ENCODE measurements at regions of chr1 and their contacts with region 1.

Region 1: DNA sequence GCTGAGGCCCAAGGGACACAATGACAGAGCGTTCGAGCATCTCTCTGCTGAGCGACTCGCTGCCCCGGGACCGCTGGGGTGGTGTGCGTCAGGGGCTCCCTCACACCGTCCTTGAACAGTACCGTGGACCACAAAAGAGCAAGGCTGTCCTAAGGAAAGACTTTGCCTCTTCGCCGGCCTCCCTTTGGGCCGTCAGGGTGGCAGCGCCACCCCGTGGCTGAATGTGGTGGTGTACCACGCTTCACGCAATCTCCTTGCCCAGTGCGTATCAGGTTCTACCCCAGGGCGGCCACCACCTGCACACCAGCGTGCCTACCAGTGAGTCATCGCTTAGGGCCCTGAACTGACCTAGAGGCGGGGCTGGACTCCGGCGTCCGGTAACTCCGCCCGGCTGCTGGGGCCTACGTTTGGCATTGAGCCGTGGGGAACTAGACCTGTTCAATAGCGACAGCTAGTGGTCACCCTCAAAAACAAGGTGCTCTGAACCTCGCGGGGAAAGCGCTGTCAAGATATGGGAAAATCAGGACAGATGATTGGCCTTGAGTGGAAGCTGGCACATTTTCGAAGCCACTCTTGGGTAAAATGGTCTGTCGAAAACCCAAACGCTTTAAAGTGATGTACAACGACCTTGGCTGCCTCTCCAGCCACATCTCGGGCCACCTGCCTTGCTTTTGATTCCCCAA is 8.1 kb upstream of the TRAF3IP3 start:
- DNase-seq: peak; percentile 100
- H3K4me3 Mint-ChIP-seq: no peak overlapping the region
- H3K27ac Mint-ChIP-seq: no peak overlapping the region
- H3K4me1 Mint-ChIP-seq: peaks cover 23% of the 10 kb centered on the region
- H3K27me3 Mint-ChIP-seq: no peaks in the 10 kb centered on the region
- CTCF ChIP-seq: peak; percentile 98

Region 2: GRCh38 chr1:209485167-209485566 is 262.6 kb before region 1 on chr1:
- CTCF ChIA-PET with region 1: no interaction called
- POLR2A ChIA-PET with region 1: no interaction called
- intact Hi-C with region 1: no loop called
- DNase-seq: peak; percentile 100
- H3K4me3 Mint-ChIP-seq: no peak overlapping the region
- H3K27ac Mint-ChIP-seq: peak overlapping the region; percentile 25
- H3K4me1 Mint-ChIP-seq: peaks cover 40% of the 10 kb centered on the region
- H3K27me3 Mint-ChIP-seq: no peaks in the 10 kb centered on the region
- CTCF ChIP-seq: no peak

Region 3: GRCh38 chr1:209585672-209586071 is 162.0 kb before region 1 on chr1:
- CTCF ChIA-PET with region 1: interaction called, 36 read pairs
- POLR2A ChIA-PET with region 1: no interaction called
- intact Hi-C with region 1: no loop called
- DNase-seq: no peak
- H3K4me3 Mint-ChIP-seq: no peak overlapping the region
- H3K27ac Mint-ChIP-seq: no peak overlapping the region
- H3K4me1 Mint-ChIP-seq: peaks cover 10% of the 10 kb centered on the region
- H3K27me3 Mint-ChIP-seq: no peaks in the 10 kb centered on the region
- CTCF ChIP-seq: no peak

Region 4: DNA sequence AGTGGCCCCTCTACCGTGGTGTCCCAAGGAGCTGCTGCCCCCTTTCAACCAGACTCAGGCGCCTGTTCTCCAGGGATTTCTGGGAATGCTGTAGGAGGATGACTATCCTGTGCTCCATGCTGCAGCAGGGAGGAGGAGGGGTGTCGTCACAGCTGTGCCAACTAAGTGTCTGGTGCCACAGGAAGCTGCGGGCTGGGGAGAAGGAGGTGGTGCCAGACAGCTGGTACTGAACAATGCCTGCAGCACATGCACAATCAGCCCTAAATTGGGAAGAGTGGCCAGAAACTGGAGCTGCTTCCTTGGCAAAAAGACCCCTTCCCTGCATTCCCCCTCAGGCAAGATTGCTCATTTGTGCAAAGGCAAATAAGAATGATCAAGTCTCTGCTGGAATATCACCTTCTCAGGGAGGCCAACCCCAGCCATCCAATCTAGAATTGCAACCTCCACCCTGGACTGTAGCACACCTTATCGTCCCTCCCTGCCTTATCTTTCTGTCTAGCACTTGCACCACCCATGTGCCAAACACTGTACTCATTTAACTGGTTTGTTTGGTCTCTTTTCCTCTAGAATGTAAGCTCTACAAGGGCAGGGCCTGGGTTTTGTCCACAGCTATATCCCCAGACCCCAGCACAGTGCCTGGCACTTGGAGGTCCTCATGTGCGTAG is 128.8 kb before region 1 on chr1:
- CTCF ChIA-PET with region 1: interaction called, 12 read pairs
- POLR2A ChIA-PET with region 1: no interaction called
- intact Hi-C with region 1: no loop called
- DNase-seq: peak; percentile 63
- H3K4me3 Mint-ChIP-seq: no peak overlapping the region
- H3K27ac Mint-ChIP-seq: peak overlapping the region; percentile 24
- H3K4me1 Mint-ChIP-seq: peaks cover 43% of the 10 kb centered on the region
- H3K27me3 Mint-ChIP-seq: no peaks in the 10 kb centered on the region
- CTCF ChIP-seq: no peak

Region 5: DNA sequence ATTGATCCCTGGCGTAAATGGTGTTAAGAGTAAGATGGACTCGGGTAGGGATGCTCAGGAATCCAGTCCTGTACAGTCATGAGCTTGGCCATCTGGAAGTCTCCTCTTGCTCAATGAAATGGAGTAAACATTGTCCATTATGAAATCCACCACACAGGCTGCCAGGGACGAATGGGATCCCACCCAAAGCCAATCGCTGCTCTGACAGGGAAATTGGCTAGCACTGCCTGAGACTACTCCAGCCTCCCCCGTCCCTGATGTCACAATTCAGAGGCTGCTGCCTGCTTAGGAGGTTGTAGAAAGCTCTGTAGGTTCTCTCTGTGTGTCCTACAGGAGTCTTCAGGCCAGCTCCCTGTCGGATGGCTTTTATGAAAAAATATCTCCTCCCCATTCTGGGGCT is 43.1 kb before region 1 on chr1 and contains the start of gene HSD11B1:
- CTCF ChIA-PET with region 1: interaction called, 21 read pairs
- POLR2A ChIA-PET with region 1: no interaction called
- intact Hi-C with region 1: no loop called
- DNase-seq: peak; percentile 94
- H3K4me3 Mint-ChIP-seq: no peak within 1 kb of the TSS
- H3K27ac Mint-ChIP-seq: no peak within 1 kb of the TSS
- H3K4me1 Mint-ChIP-seq: peaks cover 7% of the 10 kb centered on the region
- H3K27me3 Mint-ChIP-seq: no peaks in the 10 kb centered on the region
- CTCF ChIP-seq: no peak
- total RNA-seq, gene HSD11B1: 0.21 and 0.39 TPM in 2 replicates

Region 6: DNA sequence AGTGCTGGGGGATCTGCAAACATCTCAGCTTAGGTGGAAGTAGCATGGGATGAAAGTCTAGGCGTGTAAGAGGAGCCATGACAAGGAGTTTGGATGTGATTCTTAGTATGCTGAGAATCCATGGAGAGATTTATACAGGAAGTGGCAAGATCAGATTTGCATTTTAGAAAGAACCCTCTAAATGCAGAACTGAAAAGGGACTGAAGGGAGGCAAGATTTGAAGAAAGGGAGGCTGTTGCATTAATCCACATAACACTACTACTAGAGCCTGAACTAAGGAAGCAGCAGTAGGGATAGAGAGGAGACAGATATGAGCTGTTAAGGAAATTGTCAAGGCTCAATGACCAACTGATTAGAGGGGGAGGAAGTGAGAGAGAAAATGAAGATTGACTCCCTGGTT is 26.9 kb after region 1 on chr1:
- CTCF ChIA-PET with region 1: interaction called, 15 read pairs
- POLR2A ChIA-PET with region 1: interaction called, 6 read pairs
- intact Hi-C with region 1: no loop called
- DNase-seq: no peak
- H3K4me3 Mint-ChIP-seq: no peak overlapping the region
- H3K27ac Mint-ChIP-seq: no peak overlapping the region
- H3K4me1 Mint-ChIP-seq: peaks cover 1% of the 10 kb centered on the region
- H3K27me3 Mint-ChIP-seq: no peaks in the 10 kb centered on the region
- CTCF ChIP-seq: no peak

Region 7: DNA sequence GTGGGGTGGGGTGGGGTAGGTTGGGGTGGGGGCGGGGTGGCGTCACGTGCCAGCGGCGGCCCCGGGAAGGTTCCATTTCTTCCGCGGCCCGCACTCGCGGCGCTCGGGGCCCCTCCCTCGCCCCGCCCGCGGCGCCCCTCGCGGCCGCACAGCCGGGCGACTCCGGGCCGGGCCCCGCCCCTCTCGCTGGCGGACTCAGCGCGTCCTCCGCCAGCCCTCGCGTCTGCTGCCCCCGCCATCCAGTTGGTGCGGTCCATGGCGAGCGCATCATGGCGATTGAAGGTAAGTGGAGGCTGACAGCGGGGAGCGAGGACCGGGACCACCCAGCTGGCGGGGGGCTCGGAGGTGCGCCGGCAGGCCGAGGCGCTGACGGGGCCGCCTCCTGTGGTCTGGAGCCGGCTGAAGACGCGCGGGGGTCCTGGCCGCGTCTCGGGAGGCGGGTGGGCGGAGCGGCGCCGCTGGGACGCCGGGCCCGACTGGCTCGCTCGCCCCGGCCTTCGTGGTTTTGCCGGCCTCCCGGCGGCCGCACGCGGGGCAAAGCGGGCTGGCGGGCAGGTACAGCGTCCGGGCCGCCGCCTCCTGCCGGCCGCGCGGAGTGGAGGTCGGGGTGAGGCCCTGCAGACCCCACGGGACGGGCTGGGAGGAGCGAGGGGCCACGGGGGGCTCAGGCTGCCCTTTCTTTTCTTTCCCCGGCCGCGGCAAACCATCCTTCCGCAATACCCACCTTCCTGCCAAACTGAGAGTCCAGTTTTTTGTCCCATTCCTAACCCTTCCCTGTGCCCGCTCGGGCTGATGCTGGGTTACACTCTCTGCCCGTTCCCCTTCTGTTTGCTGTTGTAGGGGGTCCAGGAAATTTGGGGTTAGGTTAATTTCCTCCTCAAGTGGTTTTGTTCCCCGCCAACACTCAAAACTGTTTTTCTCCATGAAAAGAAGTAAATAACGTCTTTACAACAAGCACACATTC is 190.6 kb after region 1 on chr1 and contains the start of gene SYT14:
- CTCF ChIA-PET with region 1: no interaction called
- POLR2A ChIA-PET with region 1: no interaction called
- intact Hi-C with region 1: no loop called
- DNase-seq: no peak
- H3K4me3 Mint-ChIP-seq: peak within 1 kb of the TSS; percentile 68
- H3K27ac Mint-ChIP-seq: no peak within 1 kb of the TSS
- H3K4me1 Mint-ChIP-seq: peaks cover 7% of the 10 kb centered on the region
- H3K27me3 Mint-ChIP-seq: peaks cover 5% of the 10 kb centered on the region
- CTCF ChIP-seq: no peak
- total RNA-seq, gene SYT14: 0.79 and 1.4 TPM in 2 replicates

Region 8: GRCh38 chr1:209956116-209956515 is 208.4 kb after region 1 on chr1:
- CTCF ChIA-PET with region 1: no interaction called
- POLR2A ChIA-PET with region 1: no interaction called
- intact Hi-C with region 1: no loop called
- DNase-seq: no peak
- H3K4me3 Mint-ChIP-seq: no peak overlapping the region
- H3K27ac Mint-ChIP-seq: no peak overlapping the region
- H3K4me1 Mint-ChIP-seq: no peaks in the 10 kb centered on the region
- H3K27me3 Mint-ChIP-seq: no peaks in the 10 kb centered on the region
- CTCF ChIP-seq: no peak

Region 9: DNA sequence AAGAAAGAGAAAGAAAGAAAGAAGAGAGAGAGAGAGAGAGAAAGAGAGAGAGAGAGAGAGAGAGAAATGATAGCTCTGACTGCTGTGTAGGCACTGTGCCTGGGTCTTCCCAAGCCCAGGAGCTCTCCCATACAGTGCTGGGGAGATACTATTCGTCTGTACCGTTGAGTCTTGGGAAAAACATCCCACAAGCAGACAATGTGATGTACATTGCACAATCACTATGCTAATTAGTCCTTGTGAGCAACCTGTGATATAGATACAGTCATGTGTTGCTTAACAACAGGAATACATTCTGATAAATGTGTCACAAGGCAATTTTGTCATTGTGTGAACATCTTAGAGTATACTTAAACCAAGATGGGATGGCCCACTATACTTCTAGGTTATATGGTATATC is 962.0 kb after region 1 on chr1:
- CTCF ChIA-PET with region 1: no interaction called
- POLR2A ChIA-PET with region 1: no interaction called
- intact Hi-C with region 1: no loop called
- DNase-seq: peak; percentile 69
- H3K4me3 Mint-ChIP-seq: no peak overlapping the region
- H3K27ac Mint-ChIP-seq: no peak overlapping the region
- H3K4me1 Mint-ChIP-seq: peaks cover 6% of the 10 kb centered on the region
- H3K27me3 Mint-ChIP-seq: no peaks in the 10 kb centered on the region
- CTCF ChIP-seq: no peak

Measured in MCF 10A (cell line).